OCI-LY7 (cell line): ENCODE measurements at regions of chr19 and their contacts with region 1.

Region 1: GRCh38 chr19:15264061-15264932 is 32.0 kb upstream of the EPHX3 start:
- DNase-seq: peak; percentile 76
- H3K4me3 ChIP-seq: no peak overlapping the region
- H3K27ac ChIP-seq: no peak overlapping the region
- H3K4me1 ChIP-seq: no peaks in the 10 kb centered on the region
- CTCF ChIP-seq: peak; percentile 93

Region 2: DNA sequence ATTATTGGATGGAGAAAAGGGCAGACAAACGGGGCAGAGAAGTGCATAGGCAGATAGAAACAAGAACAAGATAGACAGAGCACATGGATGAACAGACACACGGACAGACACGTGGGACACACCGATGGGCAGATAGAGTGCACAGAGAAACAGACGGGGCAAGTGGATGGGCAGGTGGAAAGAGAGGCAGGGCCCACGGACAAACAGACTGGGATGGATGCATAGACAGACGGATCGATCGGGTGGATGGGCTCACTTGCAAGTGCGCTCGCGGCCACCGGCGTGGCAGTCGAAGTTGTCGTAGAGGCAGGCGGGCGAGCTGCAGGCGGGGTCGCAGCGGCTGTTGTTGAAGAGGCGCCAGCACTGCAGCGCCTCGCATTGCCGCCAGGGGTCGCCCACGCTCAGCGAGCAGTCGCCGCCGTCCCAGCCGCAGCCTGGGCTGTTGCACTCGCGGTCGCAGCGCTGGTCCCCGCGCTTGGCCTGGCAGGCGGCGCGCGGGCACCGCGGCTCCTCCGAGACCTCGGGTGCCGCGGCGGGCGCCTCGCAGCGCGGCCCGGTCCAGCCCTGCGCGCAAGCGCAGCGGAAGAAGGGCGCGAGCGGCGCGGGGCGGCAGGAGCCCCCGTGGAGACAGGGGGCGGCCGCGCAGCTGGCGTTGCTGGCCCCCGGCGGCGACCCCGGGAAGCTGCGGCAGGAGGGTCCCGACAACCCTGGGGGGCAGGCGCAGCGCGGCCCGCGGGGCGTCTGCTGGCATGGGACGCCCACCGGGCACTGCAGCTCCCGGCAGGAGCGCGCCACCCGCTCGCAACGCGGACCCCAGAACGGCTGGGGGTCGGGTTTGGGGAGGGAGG is 86.8 kb before region 1 on chr19:
- CTCF ChIA-PET with region 1: no interaction called
- POLR2A ChIA-PET with region 1: interaction called, 4 read pairs
- intact Hi-C with region 1: loop called (anchors 5 kb)
- DNase-seq: peak; percentile 78
- H3K4me3 ChIP-seq: no peak overlapping the region
- H3K27ac ChIP-seq: no peak overlapping the region
- H3K4me1 ChIP-seq: no peaks in the 10 kb centered on the region
- CTCF ChIP-seq: peak; percentile 80

Region 3: GRCh38 chr19:15225760-15226159 is 38.5 kb before region 1 on chr19:
- CTCF ChIA-PET with region 1: interaction called, 13 read pairs
- POLR2A ChIA-PET with region 1: interaction called, 4 read pairs
- intact Hi-C with region 1: no loop called
- DNase-seq: no peak
- H3K4me3 ChIP-seq: no peak overlapping the region
- H3K27ac ChIP-seq: no peak overlapping the region
- H3K4me1 ChIP-seq: peaks cover 11% of the 10 kb centered on the region
- CTCF ChIP-seq: no peak

Region 4: GRCh38 chr19:15323496-15324227 is 59.4 kb after region 1 on chr19:
- CTCF ChIA-PET with region 1: no interaction called
- POLR2A ChIA-PET with region 1: no interaction called
- intact Hi-C with region 1: loop called (anchors 2 kb)
- DNase-seq: no peak
- H3K4me3 ChIP-seq: no peak overlapping the region
- H3K27ac ChIP-seq: no peak overlapping the region
- H3K4me1 ChIP-seq: peaks cover 83% of the 10 kb centered on the region
- CTCF ChIP-seq: no peak